Activated T-helper 1 cell treated with anti-CD3 and anti-CD28 coated beads, Interleukin-12 subunit alpha, Interleukin-12 subunit beta, Interleukin-2, Interleukin-4 antibody, amounts not matched to agents 30 ng/mL and 10 ng/mL and 1 ng/mL, durations not matched to agents 14 hours and 24 hours and 36 hours (primary cell): ENCODE measurements at regions of chr13 and their contacts with region 1.

Region 1: GRCh38 chr13:27251166-27252091 is at the start of gene RPL21:
- DNase-seq: peak; percentile 86
- H3K4me3 Mint-ChIP-seq: peak within 1 kb of the TSS; percentile 94
- H3K27ac Mint-ChIP-seq: peak within 1 kb of the TSS; percentile 91
- H3K4me1 Mint-ChIP-seq: peaks cover 40% of the 10 kb centered on the region
- H3K27me3 Mint-ChIP-seq: no peaks in the 10 kb centered on the region
- total RNA-seq, gene RPL21: 1,045 and 1,084 TPM in 2 replicates

Region 2: GRCh38 chr13:26985285-26985878 is 266.0 kb before region 1 on chr13:
- intact Hi-C with region 1: loop called (anchors 1 kb)
- DNase-seq: peak; percentile 61
- H3K4me3 Mint-ChIP-seq: no peak overlapping the region
- H3K27ac Mint-ChIP-seq: no peak overlapping the region
- H3K4me1 Mint-ChIP-seq: peaks cover 19% of the 10 kb centered on the region
- H3K27me3 Mint-ChIP-seq: peaks cover 7% of the 10 kb centered on the region

Region 3: GRCh38 chr13:27171827-27172494 is 79.5 kb before region 1 on chr13:
- intact Hi-C with region 1: loop called (anchors 1 kb)
- DNase-seq: peak; percentile 92
- H3K4me3 Mint-ChIP-seq: peak overlapping the region; percentile 81
- H3K27ac Mint-ChIP-seq: peak overlapping the region; percentile 87
- H3K4me1 Mint-ChIP-seq: peaks cover 53% of the 10 kb centered on the region
- H3K27me3 Mint-ChIP-seq: no peaks in the 10 kb centered on the region

Region 4: GRCh38 chr13:27353166-27353583 is 101.7 kb after region 1 on chr13:
- intact Hi-C with region 1: loop called (anchors 1 kb)
- DNase-seq: peak; percentile 34
- H3K4me3 Mint-ChIP-seq: no peak overlapping the region
- H3K27ac Mint-ChIP-seq: peak overlapping the region; percentile 40
- H3K4me1 Mint-ChIP-seq: peaks cover 15% of the 10 kb centered on the region
- H3K27me3 Mint-ChIP-seq: peaks cover 7% of the 10 kb centered on the region

Region 5: DNA sequence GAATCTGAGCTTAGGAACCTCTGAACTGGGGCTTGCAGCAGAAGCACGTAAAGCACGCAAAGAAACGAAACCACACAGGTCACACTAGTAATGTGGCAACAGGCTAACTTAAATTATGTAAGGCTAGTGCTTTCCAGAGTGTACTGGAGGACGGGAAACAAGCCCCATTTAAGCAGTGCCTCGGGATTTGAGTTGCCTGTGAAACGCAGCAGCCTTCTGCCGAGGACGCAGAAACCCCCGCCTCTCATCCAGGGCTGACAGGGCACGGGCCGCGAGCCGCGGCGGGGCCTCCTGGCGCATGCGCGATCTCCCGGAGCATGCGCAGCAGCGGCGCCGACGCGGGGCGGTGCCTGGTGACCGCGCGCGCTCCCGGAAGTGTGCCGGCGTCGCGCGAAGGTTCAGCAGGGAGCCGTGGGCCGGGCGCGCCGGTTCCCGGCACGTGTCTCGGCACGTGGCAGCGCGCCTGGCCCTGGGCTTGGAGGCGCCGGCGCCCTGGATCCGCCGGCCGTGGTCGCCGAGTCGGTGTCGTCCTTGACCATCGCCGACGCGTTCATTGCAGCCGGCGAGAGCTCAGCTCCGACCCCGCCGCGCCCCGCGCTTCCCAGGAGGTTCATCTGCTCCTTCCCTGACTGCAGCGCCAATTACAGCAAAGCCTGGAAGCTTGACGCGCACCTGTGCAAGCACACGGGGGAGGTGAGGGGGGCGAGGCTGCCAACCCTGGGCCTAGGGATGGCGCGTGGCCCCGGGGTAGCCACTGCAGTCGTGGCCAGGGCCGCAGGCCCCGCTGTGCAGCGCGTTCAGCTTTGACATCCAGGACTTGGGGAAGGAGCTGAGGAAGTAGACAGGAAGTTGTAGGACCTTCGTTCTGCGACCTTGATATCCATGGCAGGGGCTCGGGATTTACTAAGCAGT is 173.1 kb after region 1 on chr13 and contains the start of gene GTF3A:
- intact Hi-C with region 1: loop called (anchors 1 kb)
- DNase-seq: peak; percentile 88
- H3K4me3 Mint-ChIP-seq: peak within 1 kb of the TSS; percentile 89
- H3K27ac Mint-ChIP-seq: peak within 1 kb of the TSS; percentile 98
- H3K4me1 Mint-ChIP-seq: peaks cover 37% of the 10 kb centered on the region
- H3K27me3 Mint-ChIP-seq: no peaks in the 10 kb centered on the region
- total RNA-seq, gene GTF3A: 255 and 264 TPM in 2 replicates

Region 6: DNA sequence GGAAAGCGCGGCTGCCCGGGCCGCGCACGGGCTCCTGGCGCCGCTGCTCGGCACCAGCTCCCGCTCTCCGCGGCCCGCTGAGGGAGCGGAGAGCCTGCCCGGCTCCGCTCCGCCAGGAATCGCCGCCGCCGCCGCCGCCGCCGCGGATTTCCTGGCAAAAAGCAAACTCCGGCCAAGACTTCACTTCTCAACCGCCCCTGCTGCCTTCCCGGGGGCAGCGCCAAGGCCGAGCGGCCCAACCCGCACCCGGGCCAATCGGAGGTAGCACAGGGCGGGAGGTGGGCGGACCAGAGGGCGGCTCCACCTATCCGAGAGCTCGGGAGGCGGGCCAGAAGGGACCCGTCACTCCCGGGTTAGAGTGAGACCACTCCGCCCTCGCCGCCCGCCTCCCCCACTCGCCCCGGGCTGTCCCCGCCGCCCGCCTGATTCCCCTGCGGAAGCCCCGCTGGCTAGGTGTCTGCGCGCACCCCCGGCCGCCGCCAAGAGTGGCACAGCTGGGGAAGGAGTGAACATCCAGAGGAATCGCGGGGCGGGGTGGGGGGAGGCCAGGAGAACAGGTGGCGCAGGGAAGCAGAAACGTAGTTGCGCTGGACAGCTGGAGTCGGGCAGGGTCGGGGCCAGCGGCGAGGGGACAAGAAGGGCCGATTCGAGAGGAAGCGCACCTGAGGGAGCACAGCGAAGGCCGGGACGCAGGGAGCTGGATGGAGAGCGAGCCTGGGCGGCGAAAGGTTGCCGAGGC is 369.1 kb after region 1 on chr13 and contains the start of gene LNX2:
- intact Hi-C with region 1: loop called (anchors 2 kb)
- DNase-seq: peak; percentile 97
- H3K4me3 Mint-ChIP-seq: peak within 1 kb of the TSS; percentile 88
- H3K27ac Mint-ChIP-seq: peak within 1 kb of the TSS; percentile 88
- H3K4me1 Mint-ChIP-seq: peaks cover 57% of the 10 kb centered on the region
- H3K27me3 Mint-ChIP-seq: no peaks in the 10 kb centered on the region
- total RNA-seq, gene LNX2: 4.1 and 4.5 TPM in 2 replicates